ENCODE measurements at regions of chr3 and their contacts with region 1.

Region 1: GRCh38 chr3:160956806-160957205 is 148.3 kb downstream of the B3GALNT1 start:
- DNase-seq: no peak
- ATAC-seq: no peak
- H3K4me3 ChIP-seq: no peak overlapping the region
- H3K27ac ChIP-seq: no peak overlapping the region
- H3K4me1 ChIP-seq: no peaks in the 10 kb centered on the region
- H3K27me3 ChIP-seq: no peaks in the 10 kb centered on the region

Region 2: DNA sequence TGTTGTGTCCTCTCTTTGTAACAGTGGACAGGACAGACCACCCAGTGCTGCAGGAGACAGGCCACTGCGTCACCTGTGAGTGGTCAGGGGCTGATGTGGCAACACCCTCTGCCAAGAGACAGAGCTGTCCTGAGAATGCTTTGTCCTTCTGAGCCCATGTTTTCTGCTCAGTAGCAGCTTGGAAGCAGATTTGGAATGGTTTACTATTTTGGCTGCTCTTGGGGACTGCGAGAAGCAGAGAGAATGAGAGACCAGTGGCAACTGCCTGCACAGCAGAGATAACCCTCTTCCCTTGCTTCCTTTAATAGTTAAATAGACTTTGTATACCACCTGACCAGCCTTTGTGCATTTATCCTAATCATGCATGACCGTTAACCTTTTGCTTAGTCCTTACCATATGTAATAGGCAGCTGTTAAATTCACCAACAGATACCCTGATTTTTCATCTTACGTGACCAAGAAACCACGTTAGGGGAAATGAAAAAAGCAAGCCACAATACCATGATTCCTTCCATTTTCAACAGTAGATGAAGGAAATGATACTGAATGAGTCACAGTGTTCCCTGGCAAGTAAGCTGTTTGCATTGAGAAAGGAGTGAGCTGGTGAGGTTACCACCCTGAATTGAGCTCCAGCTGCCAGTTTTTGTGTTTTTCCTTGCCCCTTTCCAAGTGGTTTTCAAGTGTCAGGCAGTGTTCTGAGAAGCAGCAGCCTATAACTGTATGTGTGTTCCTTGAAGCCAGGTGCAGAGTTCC is 112.9 kb after region 1 on chr3:
- intact Hi-C with region 1: loop called in 1 of 2 experiments (anchors 10 kb)
- DNase-seq: peak in 1 of 2 donors; percentile 51
- ATAC-seq: peak; percentile 83
- H3K4me3 ChIP-seq: no peak overlapping the region
- H3K27ac ChIP-seq: peak overlapping the region in 1 of 2 donors; percentile 50
- H3K4me1 ChIP-seq: peaks cover 0 to 8% of the 10 kb centered on the region in 2 donors
- H3K27me3 ChIP-seq: no peaks in the 10 kb centered on the region

Region 3: GRCh38 chr3:161274719-161275298 is 318.0 kb after region 1 on chr3:
- intact Hi-C with region 1: loop called in 1 of 2 experiments (anchors 10 kb)
- DNase-seq: no peak
- ATAC-seq: no peak
- H3K4me3 ChIP-seq: no peak overlapping the region
- H3K27ac ChIP-seq: no peak overlapping the region
- H3K4me1 ChIP-seq: no peaks in the 10 kb centered on the region
- H3K27me3 ChIP-seq: no peaks in the 10 kb centered on the region

Measured in aorta (tissue), 5 donors.